Calu3 (cell line): ENCODE measurements at regions of chr11 and their contacts with region 1.

Region 1: GRCh38 chr11:64996710-64997380 is at the start of gene BATF2:
- DNase-seq: peak; percentile 84
- H3K4me3 Mint-ChIP-seq: peak within 1 kb of the TSS; percentile 68
- H3K27ac Mint-ChIP-seq: peak within 1 kb of the TSS; percentile 82
- H3K4me1 Mint-ChIP-seq: peaks cover 28% of the 10 kb centered on the region
- H3K27me3 Mint-ChIP-seq: no peaks in the 10 kb centered on the region
- CTCF ChIP-seq: no peak
- total RNA-seq, gene BATF2: 4.5 and 11.3 TPM in 2 replicates

Region 2: GRCh38 chr11:64916775-64917662 is 79.8 kb before region 1 on chr11 and contains the start of gene ATG2A:
- CTCF ChIA-PET with region 1: interaction called, 3 read pairs
- intact Hi-C with region 1: loop called (anchors 5 kb)
- DNase-seq: peak; percentile 98
- H3K4me3 Mint-ChIP-seq: peak within 1 kb of the TSS; percentile 90
- H3K27ac Mint-ChIP-seq: peak within 1 kb of the TSS; percentile 85
- H3K4me1 Mint-ChIP-seq: no peaks in the 10 kb centered on the region
- H3K27me3 Mint-ChIP-seq: no peaks in the 10 kb centered on the region
- CTCF ChIP-seq: no peak
- total RNA-seq, gene ATG2A: 29.6 and 35.8 TPM in 2 replicates

Region 3: DNA sequence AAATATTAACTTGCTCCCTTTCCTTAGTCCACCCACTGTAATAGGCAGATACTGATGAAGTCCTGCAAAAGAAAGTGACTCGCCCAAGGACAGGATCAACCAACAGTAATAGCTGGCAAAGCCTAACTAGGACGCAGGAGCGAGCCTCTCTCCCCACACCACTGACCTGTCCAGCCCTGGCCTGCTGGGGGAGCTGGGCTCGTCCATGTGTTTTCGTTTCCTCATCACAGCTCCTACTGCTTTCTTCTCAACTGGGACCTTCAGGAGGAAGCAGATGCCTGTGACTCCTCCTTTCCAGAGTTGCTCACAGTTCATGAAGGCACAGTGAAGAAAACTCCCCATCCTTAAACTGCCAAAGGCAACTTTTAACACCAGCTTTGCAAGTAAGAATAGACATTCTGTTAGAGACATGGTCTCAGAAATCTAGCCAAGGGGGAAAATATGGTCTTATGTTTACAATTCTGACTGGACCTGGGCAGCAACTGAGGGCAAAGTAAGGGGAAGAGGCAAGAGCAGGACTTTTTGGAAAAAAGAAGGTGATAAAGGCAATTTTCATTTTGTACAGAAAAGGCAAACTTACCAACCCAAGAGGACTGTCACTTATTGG is 49.5 kb before region 1 on chr11:
- CTCF ChIA-PET with region 1: no interaction called
- intact Hi-C with region 1: no loop called
- DNase-seq: no peak
- H3K4me3 Mint-ChIP-seq: no peak overlapping the region
- H3K27ac Mint-ChIP-seq: no peak overlapping the region
- H3K4me1 Mint-ChIP-seq: no peaks in the 10 kb centered on the region
- H3K27me3 Mint-ChIP-seq: peaks cover 20% of the 10 kb centered on the region
- CTCF ChIP-seq: no peak

Region 4: GRCh38 chr11:65008016-65008415 is 11.2 kb after region 1 on chr11:
- CTCF ChIA-PET with region 1: interaction called, 12 read pairs
- intact Hi-C with region 1: no loop called
- DNase-seq: no peak
- H3K4me3 Mint-ChIP-seq: no peak overlapping the region
- H3K27ac Mint-ChIP-seq: peak overlapping the region; percentile 52
- H3K4me1 Mint-ChIP-seq: peaks cover 4% of the 10 kb centered on the region
- H3K27me3 Mint-ChIP-seq: no peaks in the 10 kb centered on the region
- CTCF ChIP-seq: no peak

Region 5: GRCh38 chr11:65027213-65028067 is 30.6 kb after region 1 on chr11 and contains the start of gene SNX15:
- CTCF ChIA-PET with region 1: no interaction called
- intact Hi-C with region 1: no loop called
- DNase-seq: peak; percentile 93
- H3K4me3 Mint-ChIP-seq: peak within 1 kb of the TSS; percentile 62
- H3K27ac Mint-ChIP-seq: peak within 1 kb of the TSS; percentile 5
- H3K4me1 Mint-ChIP-seq: peaks cover 16% of the 10 kb centered on the region
- H3K27me3 Mint-ChIP-seq: no peaks in the 10 kb centered on the region
- CTCF ChIP-seq: peak; percentile 77
- total RNA-seq, gene SNX15: 22.1 and 25.7 TPM in 2 replicates

Region 6: GRCh38 chr11:65110354-65110861 is 113.6 kb after region 1 on chr11:
- CTCF ChIA-PET with region 1: no interaction called
- intact Hi-C with region 1: no loop called
- DNase-seq: peak; percentile 95
- H3K4me3 Mint-ChIP-seq: no peak overlapping the region
- H3K27ac Mint-ChIP-seq: no peak overlapping the region
- H3K4me1 Mint-ChIP-seq: peaks cover 34% of the 10 kb centered on the region
- H3K27me3 Mint-ChIP-seq: no peaks in the 10 kb centered on the region
- CTCF ChIP-seq: peak; percentile 98

Region 7: GRCh38 chr11:65194564-65194963 is 197.7 kb after region 1 on chr11:
- CTCF ChIA-PET with region 1: no interaction called
- intact Hi-C with region 1: no loop called
- DNase-seq: no peak
- H3K4me3 Mint-ChIP-seq: no peak overlapping the region
- H3K27ac Mint-ChIP-seq: no peak overlapping the region
- H3K4me1 Mint-ChIP-seq: no peaks in the 10 kb centered on the region
- H3K27me3 Mint-ChIP-seq: no peaks in the 10 kb centered on the region
- CTCF ChIP-seq: no peak